ENCODE measurements at regions of chr4 and their contacts with region 1.

Region 1: DNA sequence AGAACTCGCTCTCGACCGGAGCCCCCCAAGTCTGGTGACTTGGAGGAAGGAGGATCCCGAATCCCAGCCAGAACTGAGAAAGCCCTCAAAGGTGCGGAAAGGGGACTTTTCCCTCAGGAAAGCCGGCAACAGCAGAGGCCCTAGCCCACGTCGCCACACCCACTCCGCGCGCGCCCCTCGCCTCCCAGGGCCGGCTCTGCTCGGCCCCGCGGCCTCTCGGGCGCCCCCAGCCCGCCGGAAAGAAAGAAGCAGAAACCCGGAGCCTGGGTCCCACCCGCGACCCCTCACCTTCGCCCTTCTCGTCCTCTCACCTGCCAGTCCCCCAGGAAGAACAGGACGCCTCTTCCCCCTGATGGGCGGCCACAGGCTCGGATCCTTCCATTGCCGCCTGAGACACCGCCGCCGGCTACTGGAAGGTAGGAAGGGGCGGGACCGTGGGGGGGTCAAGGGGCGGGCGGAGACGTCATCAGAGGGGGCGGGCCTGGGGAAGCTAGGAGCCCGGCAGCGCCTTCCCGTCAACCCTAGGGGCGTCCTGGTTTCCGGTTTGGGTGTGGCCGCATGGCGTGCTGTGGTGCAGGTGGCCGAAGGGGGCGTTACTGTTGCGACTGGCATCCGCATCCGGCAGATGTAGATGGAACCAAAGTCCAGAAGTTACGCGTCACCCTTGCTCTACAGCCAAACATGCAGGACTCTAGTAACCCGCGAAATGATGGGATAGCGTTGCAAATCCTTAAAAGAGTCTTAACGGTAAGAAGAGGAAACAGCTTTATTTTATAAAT is at the start of gene UBA6:
- DNase-seq: peak; percentile 80 to 94 (median 91)
- ATAC-seq: peak; percentile 99
- H3K4me3 ChIP-seq: peak within 1 kb of the TSS; percentile 73
- H3K4me3 Mint-ChIP-seq: peak within 1 kb of the TSS; percentile 91 to 100 (median 97)
- H3K27ac ChIP-seq: peak within 1 kb of the TSS; percentile 85
- H3K27ac Mint-ChIP-seq: peak within 1 kb of the TSS; percentile 92 to 100 (median 96)
- H3K4me1 ChIP-seq: peaks cover 10 to 16% of the 10 kb centered on the region in 2 donors
- H3K4me1 Mint-ChIP-seq: peaks cover 47 to 86% (median 75%) of the 10 kb centered on the region in 7 donors
- H3K27me3 ChIP-seq: no peaks in the 10 kb centered on the region
- H3K27me3 Mint-ChIP-seq: no peaks in the 10 kb centered on the region
- total RNA-seq, gene UBA6: 35.5 to 84.4 (median 43.9) TPM

Region 2: DNA sequence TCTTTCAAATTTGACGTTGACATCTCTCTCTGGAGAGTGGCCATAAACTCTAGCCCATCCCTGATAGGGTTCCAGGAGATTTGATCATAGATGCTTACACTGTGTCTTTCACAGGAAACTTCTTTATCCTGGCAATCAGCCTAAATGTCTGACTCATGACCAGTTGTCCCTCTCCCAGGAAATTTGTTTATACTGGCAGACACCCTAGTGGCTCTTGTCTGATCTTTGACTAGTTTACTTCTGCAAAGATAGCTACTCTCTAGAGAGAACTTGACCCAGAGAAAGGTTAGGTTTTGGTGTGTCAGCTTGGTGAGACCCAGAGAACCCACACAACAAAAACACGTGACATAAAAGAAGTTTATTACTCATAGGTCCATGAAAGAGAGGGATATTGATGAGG is 665.4 kb before region 1 on chr4:
- CTCF ChIA-PET with region 1: no interaction called
- POLR2A ChIA-PET with region 1: no interaction called
- intact Hi-C with region 1: no loop called
- DNase-seq: no peak
- ATAC-seq: no peak
- H3K4me3 ChIP-seq: no peak overlapping the region
- H3K4me3 Mint-ChIP-seq: no peak overlapping the region
- H3K27ac ChIP-seq: no peak overlapping the region
- H3K27ac Mint-ChIP-seq: no peak overlapping the region
- H3K4me1 ChIP-seq: no peaks in the 10 kb centered on the region
- H3K4me1 Mint-ChIP-seq: no peaks in the 10 kb centered on the region
- H3K27me3 ChIP-seq: no peaks in the 10 kb centered on the region
- H3K27me3 Mint-ChIP-seq: no peaks in the 10 kb centered on the region

Region 3: GRCh38 chr4:67638136-67638535 is 62.8 kb before region 1 on chr4:
- CTCF ChIA-PET with region 1: no interaction called
- POLR2A ChIA-PET with region 1: no interaction called
- intact Hi-C with region 1: loop called in 1 of 2 experiments (anchors 10 kb)
- DNase-seq: no peak
- ATAC-seq: no peak
- H3K4me3 ChIP-seq: no peak overlapping the region
- H3K4me3 Mint-ChIP-seq: no peak overlapping the region
- H3K27ac ChIP-seq: no peak overlapping the region
- H3K27ac Mint-ChIP-seq: peak overlapping the region in 4 of 9 donors; percentile 43 to 80 (median 54)
- H3K4me1 ChIP-seq: no peaks in the 10 kb centered on the region
- H3K4me1 Mint-ChIP-seq: peaks cover 0 to 29% (median 6%) of the 10 kb centered on the region in 7 donors
- H3K27me3 ChIP-seq: no peaks in the 10 kb centered on the region
- H3K27me3 Mint-ChIP-seq: no peaks in the 10 kb centered on the region

Region 4: GRCh38 chr4:67674096-67674495 is 26.8 kb before region 1 on chr4:
- CTCF ChIA-PET with region 1: no interaction called
- POLR2A ChIA-PET with region 1: no interaction called
- intact Hi-C with region 1: no loop called
- DNase-seq: no peak
- ATAC-seq: no peak
- H3K4me3 ChIP-seq: no peak overlapping the region
- H3K4me3 Mint-ChIP-seq: no peak overlapping the region
- H3K27ac ChIP-seq: no peak overlapping the region
- H3K27ac Mint-ChIP-seq: peak overlapping the region in 1 of 9 donors; percentile 25
- H3K4me1 ChIP-seq: no peaks in the 10 kb centered on the region
- H3K4me1 Mint-ChIP-seq: peaks cover 0 to 5% (median 0%) of the 10 kb centered on the region in 7 donors
- H3K27me3 ChIP-seq: no peaks in the 10 kb centered on the region
- H3K27me3 Mint-ChIP-seq: no peaks in the 10 kb centered on the region

Region 5: DNA sequence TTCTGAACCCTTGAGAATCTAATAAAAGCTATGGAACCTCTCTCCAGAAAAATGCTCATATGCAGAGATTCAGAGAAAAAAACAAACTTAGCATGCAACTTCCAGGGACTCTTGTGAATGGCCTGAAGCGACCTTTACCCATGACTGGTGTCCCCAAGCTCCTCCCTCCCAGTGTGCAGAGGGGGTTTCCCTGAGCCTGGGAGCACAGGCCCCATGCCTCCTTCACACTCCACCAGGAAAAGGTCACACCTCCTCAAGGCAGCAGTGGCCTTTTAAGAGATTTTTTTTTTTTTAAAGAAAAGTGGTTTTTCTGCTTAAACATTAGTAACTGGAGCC is 13.3 kb after region 1 on chr4:
- CTCF ChIA-PET with region 1: no interaction called
- POLR2A ChIA-PET with region 1: interaction called, 3 read pairs
- intact Hi-C with region 1: loop called in 1 of 2 experiments (anchors 1 kb)
- DNase-seq: peak in 1 of 9 donors; percentile 52
- ATAC-seq: no peak
- H3K4me3 ChIP-seq: no peak overlapping the region
- H3K4me3 Mint-ChIP-seq: peak overlapping the region in 1 of 10 donors; percentile 12
- H3K27ac ChIP-seq: no peak overlapping the region
- H3K27ac Mint-ChIP-seq: peak overlapping the region in 1 of 9 donors; percentile 76
- H3K4me1 ChIP-seq: no peaks in the 10 kb centered on the region
- H3K4me1 Mint-ChIP-seq: peaks cover 5 to 30% (median 20%) of the 10 kb centered on the region in 7 donors
- H3K27me3 ChIP-seq: no peaks in the 10 kb centered on the region
- H3K27me3 Mint-ChIP-seq: no peaks in the 10 kb centered on the region

Region 6: GRCh38 chr4:67746797-67747495 is 46.0 kb after region 1 on chr4:
- CTCF ChIA-PET with region 1: interaction called, 4 read pairs
- POLR2A ChIA-PET with region 1: no interaction called
- intact Hi-C with region 1: loop called in 1 of 2 experiments (anchors 1 kb)
- DNase-seq: peak in 5 of 9 donors; percentile 27 to 48 (median 41)
- ATAC-seq: no peak
- H3K4me3 ChIP-seq: no peak overlapping the region
- H3K4me3 Mint-ChIP-seq: no peak overlapping the region
- H3K27ac ChIP-seq: no peak overlapping the region
- H3K27ac Mint-ChIP-seq: no peak overlapping the region
- H3K4me1 ChIP-seq: no peaks in the 10 kb centered on the region
- H3K4me1 Mint-ChIP-seq: peaks cover 0 to 14% (median 0%) of the 10 kb centered on the region in 7 donors
- H3K27me3 ChIP-seq: no peaks in the 10 kb centered on the region
- H3K27me3 Mint-ChIP-seq: no peaks in the 10 kb centered on the region

Region 7: DNA sequence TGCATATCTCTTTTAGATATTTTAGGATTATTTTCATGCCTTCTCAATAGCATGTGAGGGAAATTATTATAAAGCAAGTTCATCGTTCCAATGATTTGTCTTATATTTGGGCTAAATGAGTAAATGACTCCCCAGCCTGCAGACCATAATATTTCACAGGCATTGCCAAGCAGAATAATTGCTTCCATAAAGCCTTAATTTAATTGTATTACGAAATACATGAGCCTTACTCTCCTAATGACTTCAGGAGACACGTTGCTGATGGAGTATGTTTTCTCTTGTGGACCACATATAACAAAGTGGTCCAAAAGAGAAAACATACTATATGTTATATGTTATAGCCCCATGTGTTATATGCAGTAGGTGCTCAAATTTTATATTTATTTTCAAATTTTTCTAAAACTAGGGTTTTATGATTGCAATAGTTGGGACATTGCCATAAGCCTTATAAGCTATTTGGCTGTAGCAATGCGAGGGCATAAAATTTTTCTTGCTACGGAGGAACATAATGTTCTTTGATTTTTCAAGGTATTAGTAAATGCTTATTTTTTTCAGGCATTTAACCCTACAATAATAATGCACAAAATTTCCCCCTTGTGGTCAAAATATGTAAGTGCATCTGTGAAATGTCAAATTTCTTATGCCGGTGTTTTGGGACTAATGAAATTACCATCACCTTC is 209.1 kb after region 1 on chr4:
- CTCF ChIA-PET with region 1: no interaction called
- POLR2A ChIA-PET with region 1: no interaction called
- intact Hi-C with region 1: loop called in 1 of 2 experiments (anchors 1 kb)
- DNase-seq: peak in 5 of 9 donors; percentile 7 to 18 (median 13)
- ATAC-seq: no peak
- H3K4me3 ChIP-seq: no peak overlapping the region
- H3K4me3 Mint-ChIP-seq: no peak overlapping the region
- H3K27ac ChIP-seq: no peak overlapping the region
- H3K27ac Mint-ChIP-seq: no peak overlapping the region
- H3K4me1 ChIP-seq: no peaks in the 10 kb centered on the region
- H3K4me1 Mint-ChIP-seq: peaks cover 0 to 2% (median 0%) of the 10 kb centered on the region in 7 donors
- H3K27me3 ChIP-seq: no peaks in the 10 kb centered on the region
- H3K27me3 Mint-ChIP-seq: peaks cover 3 to 26% (median 13%) of the 10 kb centered on the region in 5 donors

Region 8: GRCh38 chr4:68349649-68350360 is 648.9 kb after region 1 on chr4 and contains the start of gene YTHDC1:
- CTCF ChIA-PET with region 1: no interaction called
- POLR2A ChIA-PET with region 1: no interaction called
- intact Hi-C with region 1: loop called (anchors 1 to 2 kb)
- DNase-seq: peak; percentile 84 to 97 (median 95)
- ATAC-seq: peak; percentile 97
- H3K4me3 ChIP-seq: peak within 1 kb of the TSS; percentile 100
- H3K4me3 Mint-ChIP-seq: peak within 1 kb of the TSS; percentile 94 to 100 (median 98)
- H3K27ac ChIP-seq: peak within 1 kb of the TSS; percentile 96
- H3K27ac Mint-ChIP-seq: peak within 1 kb of the TSS; percentile 97 to 100 (median 100)
- H3K4me1 ChIP-seq: peaks cover 26 to 35% of the 10 kb centered on the region in 2 donors
- H3K4me1 Mint-ChIP-seq: peaks cover 16 to 48% (median 41%) of the 10 kb centered on the region in 7 donors
- H3K27me3 ChIP-seq: no peaks in the 10 kb centered on the region
- H3K27me3 Mint-ChIP-seq: peaks cover 0 to 20% (median 0%) of the 10 kb centered on the region in 5 donors
- total RNA-seq, gene YTHDC1: 99.4 to 254 (median 219) TPM

Region 9: DNA sequence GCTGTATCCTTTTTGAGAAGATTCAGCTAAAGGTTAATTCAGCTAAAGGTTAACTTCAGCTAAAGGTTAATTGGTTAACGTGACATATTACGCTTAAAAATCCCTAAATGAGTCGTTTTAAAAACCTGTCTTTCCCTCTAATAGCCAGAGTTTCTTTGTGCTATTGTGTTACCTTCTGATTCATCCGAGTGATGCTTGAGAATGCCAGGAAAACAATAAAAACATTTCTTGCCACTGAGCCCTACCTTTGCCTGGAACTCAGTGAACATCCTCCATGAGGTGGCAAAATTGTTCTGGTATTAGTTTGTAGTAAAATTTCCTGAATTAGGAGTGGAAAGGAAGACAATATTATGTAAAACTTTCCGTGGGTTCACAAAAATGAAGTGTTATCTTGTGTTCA is 732.7 kb after region 1 on chr4:
- CTCF ChIA-PET with region 1: no interaction called
- POLR2A ChIA-PET with region 1: no interaction called
- intact Hi-C with region 1: loop called in 1 of 2 experiments (anchors 5 kb)
- DNase-seq: no peak
- ATAC-seq: no peak
- H3K4me3 ChIP-seq: no peak overlapping the region
- H3K4me3 Mint-ChIP-seq: no peak overlapping the region
- H3K27ac ChIP-seq: no peak overlapping the region
- H3K27ac Mint-ChIP-seq: peak overlapping the region in 1 of 9 donors; percentile 60
- H3K4me1 ChIP-seq: peaks cover 10 to 22% of the 10 kb centered on the region in 2 donors
- H3K4me1 Mint-ChIP-seq: peaks cover 20 to 54% (median 34%) of the 10 kb centered on the region in 7 donors
- H3K27me3 ChIP-seq: no peaks in the 10 kb centered on the region
- H3K27me3 Mint-ChIP-seq: no peaks in the 10 kb centered on the region

Measured in naive thymus-derived CD4-positive, alpha-beta T cell (primary cell).